ENCODE measurements at regions of chr6 and their contacts with region 1.

Region 1: DNA sequence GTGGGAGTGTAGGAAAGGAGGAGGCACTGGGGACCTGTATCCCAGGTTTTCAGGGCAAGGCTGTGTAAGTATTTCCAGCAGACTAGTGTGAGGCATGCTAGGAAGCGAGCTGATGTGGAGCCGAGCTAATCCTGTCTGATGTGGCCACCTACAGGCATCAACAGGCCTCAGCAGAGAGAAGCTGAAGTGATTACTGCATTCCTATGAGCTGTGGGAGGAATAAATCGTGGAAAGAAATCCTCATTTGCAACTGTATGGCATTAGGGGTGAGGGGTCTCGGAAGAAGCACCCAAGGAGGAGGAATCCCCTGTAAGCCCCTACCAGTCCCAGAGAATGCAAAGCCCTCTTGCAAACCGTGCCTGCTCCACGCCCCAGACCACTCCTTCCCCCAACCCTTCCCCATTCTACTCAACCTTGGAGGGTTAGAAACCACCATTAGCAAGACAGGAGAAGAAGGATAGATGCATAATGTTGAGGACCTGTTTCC is 41.6 kb downstream of the C6orf15 start:
- DNase-seq: peak; percentile 75
- H3K4me3 ChIP-seq: no peak overlapping the region
- CTCF ChIP-seq: peak; percentile 87

Region 2: GRCh38 chr6:30915591-30915946 is 155.2 kb before region 1 on chr6:
- in situ Hi-C with region 1: loop called (anchors 5 kb)
- DNase-seq: peak; percentile 63
- H3K4me3 ChIP-seq: no peak overlapping the region
- CTCF ChIP-seq: peak; percentile 75